B cell (primary cell): ENCODE measurements at regions of chr9 and their contacts with region 1.

Region 1: DNA sequence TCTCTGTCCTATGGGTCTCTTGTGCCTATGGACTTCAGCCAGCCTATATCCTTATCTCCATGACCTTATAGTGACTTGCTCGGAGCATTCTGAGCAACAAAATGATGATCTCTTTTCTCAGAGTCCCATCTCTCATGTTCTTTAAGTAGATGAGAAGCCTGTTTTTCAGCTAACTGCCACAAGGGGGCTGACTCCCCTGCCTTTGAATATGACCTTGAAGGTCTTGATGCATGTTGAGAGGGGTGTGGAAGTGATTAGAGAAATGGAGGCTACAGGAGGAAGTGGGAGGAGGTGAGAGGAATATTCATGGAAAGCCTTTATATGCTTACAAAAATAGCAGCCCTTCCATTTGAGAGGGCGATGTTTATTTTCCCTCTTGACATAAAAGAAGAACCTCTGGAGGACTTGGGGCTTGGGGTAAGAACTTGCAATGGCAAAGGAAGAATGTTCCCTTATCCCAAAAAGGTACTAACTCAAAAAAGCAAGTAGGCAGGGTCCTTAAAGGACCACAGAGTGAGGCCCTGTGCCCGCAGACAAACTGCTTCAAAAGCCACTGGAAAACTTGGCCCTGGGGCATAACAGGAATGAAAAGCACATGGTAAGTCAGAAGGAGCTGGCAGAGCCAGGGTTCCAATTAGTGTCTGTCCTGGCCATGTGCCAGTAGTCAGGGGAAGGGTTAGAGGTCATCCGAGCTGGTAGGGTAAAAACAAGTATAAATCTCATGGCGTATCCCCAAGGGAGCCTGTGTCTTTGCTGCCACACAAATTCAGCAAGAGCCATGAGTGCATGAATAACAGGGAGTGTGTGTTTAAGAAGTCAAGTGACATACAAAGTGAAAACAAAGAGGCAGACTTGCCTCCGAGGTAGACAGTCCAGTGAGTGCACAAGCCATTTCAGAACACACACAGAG is 39.1 kb downstream of the FGD3 start:
- DNase-seq: peak; percentile 60
- ATAC-seq: no peak
- H3K4me3 ChIP-seq: no peak overlapping the region
- H3K4me3 Mint-ChIP-seq: no peak overlapping the region
- H3K27ac ChIP-seq: peak overlapping the region in 1 of 2 donors; percentile 59
- H3K27ac Mint-ChIP-seq: peak overlapping the region; percentile 12
- H3K4me1 ChIP-seq: peaks cover 3 to 17% of the 10 kb centered on the region in 2 donors
- H3K4me1 Mint-ChIP-seq: peaks cover 56% of the 10 kb centered on the region
- H3K27me3 ChIP-seq: no peaks in the 10 kb centered on the region
- H3K27me3 Mint-ChIP-seq: no peaks in the 10 kb centered on the region
- CTCF ChIP-seq: peak; percentile 81

Region 2: DNA sequence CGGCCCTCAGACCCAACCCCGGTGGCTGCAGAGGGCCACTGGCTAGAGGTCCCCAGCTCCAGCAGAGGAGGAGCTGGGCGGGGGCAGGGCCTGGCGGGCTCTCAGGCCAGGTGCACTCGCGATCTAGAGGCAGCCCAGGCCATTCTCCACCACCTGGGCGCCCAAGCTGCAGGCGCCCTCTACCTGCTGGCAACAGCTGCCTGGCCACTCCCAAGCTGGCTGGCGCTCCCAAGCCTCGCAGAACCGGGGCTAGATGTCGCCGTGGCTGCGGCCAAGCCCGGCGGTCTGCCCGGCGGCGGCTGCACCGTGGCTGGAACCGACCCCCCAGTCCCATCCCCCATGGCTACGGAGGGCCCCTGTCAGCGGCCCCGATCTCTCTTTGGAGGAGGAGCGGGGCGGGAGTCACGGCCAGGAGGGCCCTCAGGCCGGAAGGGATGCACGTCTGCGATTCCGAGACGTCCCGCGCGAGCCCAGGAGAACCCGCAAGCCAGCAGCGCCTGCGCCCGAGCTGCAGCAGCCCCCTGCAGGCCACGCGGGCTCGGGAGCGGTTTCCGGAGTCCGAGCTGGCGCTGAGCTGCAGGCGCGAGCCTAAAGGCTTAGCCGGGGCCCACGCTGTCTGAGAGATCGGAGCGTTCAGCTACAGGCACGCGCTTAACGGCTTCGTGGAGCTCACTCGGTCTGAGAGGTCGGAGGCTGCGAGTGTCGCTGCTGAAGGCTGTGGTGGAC is 177.5 kb before region 1 on chr9:
- CTCF ChIA-PET with region 1: no interaction called
- POLR2A ChIA-PET with region 1: no interaction called
- intact Hi-C with region 1: no loop called
- DNase-seq: peak; percentile 75
- ATAC-seq: peak; percentile 72
- H3K4me3 ChIP-seq: peak overlapping the region in 4 of 5 experiments; percentile 39 to 74 (median 56)
- H3K4me3 Mint-ChIP-seq: peak overlapping the region; percentile 91
- H3K27ac ChIP-seq: no peak overlapping the region
- H3K27ac Mint-ChIP-seq: no peak overlapping the region
- H3K4me1 ChIP-seq: peaks cover 32 to 36% of the 10 kb centered on the region in 2 donors
- H3K4me1 Mint-ChIP-seq: peaks cover 25% of the 10 kb centered on the region
- H3K27me3 ChIP-seq: peaks cover 0 to 65% (median 56%) of the 10 kb centered on the region in 4 experiments
- H3K27me3 Mint-ChIP-seq: peaks cover 48% of the 10 kb centered on the region
- CTCF ChIP-seq: peak; percentile 30

Region 3: DNA sequence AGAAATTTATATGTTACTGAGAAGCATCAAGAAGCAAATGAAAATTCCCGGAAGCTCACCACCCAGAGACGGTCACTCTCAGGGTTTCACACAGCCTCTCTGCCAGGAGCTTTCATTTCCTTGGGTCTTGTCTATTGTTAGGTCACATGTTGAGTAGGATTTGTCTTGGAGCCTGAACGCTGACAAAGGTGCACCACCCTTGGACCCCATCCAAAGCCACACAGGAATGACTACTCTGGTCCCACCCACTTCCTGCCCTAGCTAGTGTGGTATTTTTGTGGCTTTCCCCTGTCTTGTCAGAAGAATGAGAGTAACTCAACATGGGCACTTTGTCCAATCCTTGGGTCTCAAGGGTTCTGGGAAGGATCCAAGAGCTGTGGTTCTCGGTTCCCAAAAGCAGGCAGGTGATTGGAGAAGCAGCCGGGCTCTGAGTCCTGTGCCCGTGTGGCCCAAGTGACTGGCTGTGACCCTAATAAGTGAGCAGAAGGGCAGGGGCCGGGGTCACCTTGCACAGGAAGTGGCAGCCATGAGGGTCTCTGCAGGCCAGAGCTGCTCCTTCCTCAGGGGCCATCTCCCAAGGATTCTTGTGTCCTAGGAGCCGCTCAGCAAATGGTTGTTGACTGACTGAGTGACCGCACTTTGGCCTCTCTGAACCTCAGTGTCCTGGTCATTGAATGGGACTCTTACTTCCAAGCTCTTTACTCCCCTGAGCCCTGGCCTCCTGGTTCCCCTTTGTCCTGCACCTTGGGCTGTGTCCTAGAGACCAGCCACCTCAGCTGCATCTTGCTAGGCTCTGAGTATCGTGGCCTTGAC is 32.2 kb before region 1 on chr9:
- CTCF ChIA-PET with region 1: interaction called, 8 read pairs
- POLR2A ChIA-PET with region 1: no interaction called
- intact Hi-C with region 1: loop called (anchors 1 kb)
- DNase-seq: peak; percentile 37
- ATAC-seq: peak; percentile 53
- H3K4me3 ChIP-seq: peak overlapping the region in 4 of 5 experiments; percentile 7 to 45 (median 34)
- H3K4me3 Mint-ChIP-seq: peak overlapping the region; percentile 61
- H3K27ac ChIP-seq: peak overlapping the region in 1 of 2 donors; percentile 23
- H3K27ac Mint-ChIP-seq: peak overlapping the region; percentile 26
- H3K4me1 ChIP-seq: peaks cover 16 to 17% of the 10 kb centered on the region in 2 donors
- H3K4me1 Mint-ChIP-seq: peaks cover 24% of the 10 kb centered on the region
- H3K27me3 ChIP-seq: peaks cover 0 to 7% (median 0%) of the 10 kb centered on the region in 4 experiments
- H3K27me3 Mint-ChIP-seq: peaks cover 6% of the 10 kb centered on the region
- CTCF ChIP-seq: no peak

Region 4: DNA sequence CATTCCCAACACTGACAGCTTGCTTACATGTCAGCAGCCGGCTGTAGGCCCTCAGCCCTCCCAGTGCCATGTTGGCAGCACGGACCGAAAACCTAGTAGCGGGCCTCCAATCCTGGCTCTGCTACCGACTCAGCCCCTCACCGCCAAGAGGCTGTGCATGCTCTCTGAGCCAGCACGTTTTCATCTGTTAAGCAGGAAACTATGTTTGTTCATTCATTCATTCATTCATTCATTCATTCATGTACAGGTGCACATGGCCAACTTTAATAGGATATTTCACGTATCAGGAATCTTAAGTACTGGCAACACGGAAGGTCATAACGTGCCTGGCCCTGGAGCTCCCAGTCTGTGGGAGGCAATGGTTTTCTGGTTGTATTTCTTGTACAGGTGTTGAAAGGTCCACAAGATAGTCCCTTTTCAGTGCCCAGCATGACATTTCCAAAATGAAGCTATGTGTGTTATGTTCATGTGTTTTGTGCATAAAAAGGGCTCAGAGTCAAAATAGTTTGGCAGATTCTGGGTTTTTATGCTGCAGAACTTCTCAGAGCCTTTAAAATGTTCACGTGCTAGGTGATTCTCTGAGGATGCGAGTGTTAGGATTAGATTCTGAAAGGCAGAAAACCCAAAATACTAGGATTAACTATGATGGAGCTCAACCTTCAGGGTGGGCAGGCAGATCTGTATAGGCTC is 89.8 kb after region 1 on chr9:
- CTCF ChIA-PET with region 1: no interaction called
- POLR2A ChIA-PET with region 1: interaction called, 10 read pairs
- intact Hi-C with region 1: no loop called
- DNase-seq: no peak
- ATAC-seq: no peak
- H3K4me3 ChIP-seq: no peak overlapping the region
- H3K4me3 Mint-ChIP-seq: no peak overlapping the region
- H3K27ac ChIP-seq: no peak overlapping the region
- H3K27ac Mint-ChIP-seq: no peak overlapping the region
- H3K4me1 ChIP-seq: peaks cover 9 to 10% of the 10 kb centered on the region in 2 donors
- H3K4me1 Mint-ChIP-seq: peaks cover 10% of the 10 kb centered on the region
- H3K27me3 ChIP-seq: no peaks in the 10 kb centered on the region
- H3K27me3 Mint-ChIP-seq: no peaks in the 10 kb centered on the region
- CTCF ChIP-seq: no peak